ENCODE measurements at regions of chr10 and their contacts with region 1.

Region 1: GRCh38 chr10:73908853-73909538 is 1.9 kb upstream of the PLAU start:
- DNase-seq: peak; percentile 63
- ATAC-seq: peak; percentile 70
- H3K4me3 ChIP-seq: no peak overlapping the region
- H3K27ac ChIP-seq: no peak overlapping the region
- H3K4me1 ChIP-seq: peaks cover 18% of the 10 kb centered on the region
- H3K27me3 ChIP-seq: peaks cover 0 to 7% of the 10 kb centered on the region in 2 experiments; a peak in 3 of 4 replicates
- CTCF ChIP-seq: no peak
- EP300 ChIP-seq: peak; percentile 21 to 37; a peak in 1 of 4 replicates
- POLR2A ChIP-seq: no peak
- RAD21 ChIP-seq: no peak

Region 2: DNA sequence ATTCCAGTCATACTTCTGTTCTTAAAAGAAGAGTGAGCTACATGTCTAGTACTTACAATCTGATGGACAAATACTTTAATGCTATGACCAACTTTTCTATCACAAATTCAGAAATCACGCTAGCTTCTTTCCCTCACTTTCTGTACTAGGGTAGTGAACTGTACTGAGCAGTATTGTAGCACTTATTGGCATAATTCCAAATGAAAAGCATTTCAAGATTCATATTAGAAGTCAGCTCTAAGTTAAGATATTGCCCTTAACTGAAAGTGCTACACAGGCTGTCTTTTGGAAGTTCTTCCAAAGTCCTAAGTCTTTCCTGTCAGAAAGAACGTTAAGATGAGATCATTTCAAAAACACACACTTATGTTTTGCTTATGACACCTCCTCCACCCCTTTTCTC is 825.8 kb before region 1 on chr10:
- CTCF ChIA-PET with region 1: no interaction called
- POLR2A ChIA-PET with region 1: no interaction called
- RAD21 ChIA-PET with region 1: no interaction called
- SMC1A ChIA-PET with region 1: no interaction called
- in situ Hi-C with region 1: no loop called
- intact Hi-C with region 1: no loop called
- DNase-seq: no peak
- ATAC-seq: no peak
- H3K4me3 ChIP-seq: no peak overlapping the region
- H3K27ac ChIP-seq: no peak overlapping the region
- H3K4me1 ChIP-seq: peaks cover 10% of the 10 kb centered on the region
- H3K27me3 ChIP-seq: no peaks in the 10 kb centered on the region
- CTCF ChIP-seq: no peak
- EP300 ChIP-seq: no peak
- POLR2A ChIP-seq: no peak
- RAD21 ChIP-seq: no peak

Region 3: DNA sequence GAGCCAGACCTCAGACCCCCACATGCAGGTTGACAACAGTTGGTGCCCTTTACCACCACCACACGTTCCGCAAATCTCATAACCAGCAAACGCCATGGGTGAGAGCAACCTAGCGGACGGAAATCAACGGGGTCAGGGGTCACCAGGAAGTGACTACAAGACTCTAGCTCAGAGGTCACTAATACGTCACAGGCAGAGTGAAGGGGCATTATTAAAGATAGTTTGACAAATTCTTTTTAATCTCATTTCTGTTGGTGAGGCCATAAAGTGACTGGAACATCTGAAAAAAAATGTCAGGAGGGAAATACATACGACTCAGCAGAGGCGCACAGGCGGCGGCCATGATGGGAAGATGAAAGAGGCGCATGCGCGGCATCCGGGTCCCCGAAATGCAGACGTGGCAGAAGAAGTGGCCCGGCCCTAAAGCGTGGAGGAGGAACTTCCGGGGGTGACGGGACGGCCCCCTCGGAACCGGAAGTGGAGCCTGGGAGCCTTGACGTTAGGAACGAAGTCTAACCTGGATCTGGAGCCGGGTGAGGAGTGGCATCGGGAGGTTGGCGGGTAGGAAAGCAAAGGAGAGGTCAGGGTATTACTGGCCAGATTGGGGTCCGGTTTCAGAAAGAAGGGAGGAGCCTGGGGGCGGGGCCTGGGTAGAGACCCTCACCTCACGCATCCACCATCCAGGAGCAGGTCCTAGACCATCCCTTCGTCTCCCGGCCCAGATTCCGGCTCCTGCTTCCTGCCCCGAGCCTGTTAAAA is 164.9 kb before region 1 on chr10 and contains the start of gene SEC24C:
- CTCF ChIA-PET with region 1: no interaction called
- POLR2A ChIA-PET with region 1: no interaction called
- RAD21 ChIA-PET with region 1: no interaction called
- SMC1A ChIA-PET with region 1: no interaction called
- in situ Hi-C with region 1: no loop called
- intact Hi-C with region 1: no loop called
- DNase-seq: peak; percentile 88
- ATAC-seq: peak; percentile 92
- H3K4me3 ChIP-seq: peak within 1 kb of the TSS; percentile 95
- H3K27ac ChIP-seq: peak within 1 kb of the TSS; percentile 97
- H3K4me1 ChIP-seq: peaks cover 11% of the 10 kb centered on the region
- H3K27me3 ChIP-seq: no peaks in the 10 kb centered on the region
- CTCF ChIP-seq: no peak
- EP300 ChIP-seq: no peak
- POLR2A ChIP-seq: peak; percentile 92
- RAD21 ChIP-seq: no peak
- polyA plus RNA-seq, gene SEC24C: 12.7 to 18.8 TPM

Region 4: GRCh38 chr10:73803680-73804286 is 105.2 kb before region 1 on chr10:
- CTCF ChIA-PET with region 1: no interaction called
- POLR2A ChIA-PET with region 1: no interaction called
- RAD21 ChIA-PET with region 1: no interaction called
- SMC1A ChIA-PET with region 1: no interaction called
- in situ Hi-C with region 1: no loop called
- intact Hi-C with region 1: no loop called
- DNase-seq: peak; percentile 81
- ATAC-seq: peak; percentile 95
- H3K4me3 ChIP-seq: no peak overlapping the region
- H3K27ac ChIP-seq: peak overlapping the region; percentile 97
- H3K4me1 ChIP-seq: peaks cover 25% of the 10 kb centered on the region
- H3K27me3 ChIP-seq: no peaks in the 10 kb centered on the region
- CTCF ChIP-seq: no peak
- EP300 ChIP-seq: 0 out of 4 replicates have a peak, but pooled peaks of 1 of the 2 experiments have one; percentile 48
- POLR2A ChIP-seq: 0 out of 2 replicates have a peak, but pooled peaks have one; percentile 32
- RAD21 ChIP-seq: no peak

Region 5: DNA sequence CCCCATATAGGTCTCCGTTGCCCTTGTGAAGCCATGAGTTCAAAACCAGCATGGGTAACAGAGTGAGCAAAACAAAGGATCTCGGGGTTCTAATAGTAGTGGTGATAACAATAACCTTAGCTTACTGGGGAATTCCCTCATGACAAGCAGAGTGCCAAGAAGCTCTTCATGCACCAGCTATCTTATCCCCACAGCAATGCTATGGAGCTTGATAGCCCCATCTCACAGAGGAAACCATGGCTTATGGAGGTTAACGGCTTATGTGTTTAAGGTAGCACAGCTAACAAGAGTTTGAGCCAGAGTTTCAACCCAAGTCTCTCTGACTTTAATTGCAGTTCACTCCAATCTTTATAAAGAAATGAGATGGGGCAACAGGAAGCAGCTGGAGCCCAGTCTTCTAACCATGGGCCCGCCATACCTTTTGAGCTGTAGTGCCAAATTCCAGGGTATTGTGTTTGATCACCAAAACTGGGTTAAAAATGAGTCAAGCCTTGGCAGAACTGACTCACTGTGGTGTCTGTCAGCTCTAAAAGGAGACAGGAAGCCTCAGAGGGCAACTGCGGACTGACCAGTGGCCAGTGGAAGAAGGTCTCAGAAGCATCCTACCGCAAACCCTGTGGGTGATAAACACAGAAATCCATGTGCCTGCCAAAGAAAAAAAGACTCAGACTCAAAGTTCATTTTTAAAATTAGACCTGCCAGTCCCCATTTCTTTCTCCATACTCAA is 14.6 kb before region 1 on chr10:
- CTCF ChIA-PET with region 1: interaction called, 18 read pairs
- POLR2A ChIA-PET with region 1: interaction called, 7 read pairs
- RAD21 ChIA-PET with region 1: interaction called, 54 read pairs
- SMC1A ChIA-PET with region 1: interaction called, 1,048 read pairs
- in situ Hi-C with region 1: no loop called
- intact Hi-C with region 1: no loop called
- DNase-seq: no peak
- ATAC-seq: peak; percentile 87
- H3K4me3 ChIP-seq: no peak overlapping the region
- H3K27ac ChIP-seq: no peak overlapping the region
- H3K4me1 ChIP-seq: no peaks in the 10 kb centered on the region
- H3K27me3 ChIP-seq: no peaks in the 10 kb centered on the region
- CTCF ChIP-seq: no peak
- EP300 ChIP-seq: no peak
- POLR2A ChIP-seq: no peak
- RAD21 ChIP-seq: no peak

Region 6: GRCh38 chr10:73931767-73932619 is 23.0 kb after region 1 on chr10:
- CTCF ChIA-PET with region 1: interaction called, 10 read pairs
- POLR2A ChIA-PET with region 1: interaction called, 7 read pairs
- RAD21 ChIA-PET with region 1: interaction called, 21 read pairs
- SMC1A ChIA-PET with region 1: interaction called, 5 read pairs
- in situ Hi-C with region 1: no loop called
- intact Hi-C with region 1: no loop called
- DNase-seq: peak; percentile 50
- ATAC-seq: peak; percentile 89
- H3K4me3 ChIP-seq: no peak overlapping the region
- H3K27ac ChIP-seq: peak overlapping the region; percentile 68
- H3K4me1 ChIP-seq: peaks cover 13% of the 10 kb centered on the region
- H3K27me3 ChIP-seq: no peaks in the 10 kb centered on the region
- CTCF ChIP-seq: no peak
- EP300 ChIP-seq: 0 out of 4 replicates have a peak, but pooled peaks of 1 of the 2 experiments have one; percentile 41
- POLR2A ChIP-seq: 0 out of 2 replicates have a peak, but pooled peaks have one; percentile 27
- RAD21 ChIP-seq: 0 out of 2 replicates have a peak, but pooled peaks have one; percentile 11

Region 7: GRCh38 chr10:74194545-74194944 is 285.5 kb after region 1 on chr10:
- CTCF ChIA-PET with region 1: no interaction called
- POLR2A ChIA-PET with region 1: no interaction called
- RAD21 ChIA-PET with region 1: no interaction called
- SMC1A ChIA-PET with region 1: no interaction called
- in situ Hi-C with region 1: no loop called
- intact Hi-C with region 1: no loop called
- DNase-seq: no peak
- ATAC-seq: no peak
- H3K4me3 ChIP-seq: no peak overlapping the region
- H3K27ac ChIP-seq: no peak overlapping the region
- H3K4me1 ChIP-seq: no peaks in the 10 kb centered on the region; the same call in none of the 2 replicates
- H3K27me3 ChIP-seq: no peaks in the 10 kb centered on the region
- CTCF ChIP-seq: no peak
- EP300 ChIP-seq: no peak
- POLR2A ChIP-seq: no peak
- RAD21 ChIP-seq: no peak

Measured in GM12878 (cell line).